GM10248 (cell line): ENCODE measurements at regions of chrX and their contacts with region 1.

Region 1: GRCh38 chrX:119729408-119730201 is 28.8 kb upstream of the SOWAHD start:
- DNase-seq: peak; percentile 59
- CTCF ChIP-seq: peak; percentile 74

Region 2: GRCh38 chrX:119516157-119516702 is 213.4 kb before region 1 on chrX:
- CTCF ChIA-PET with region 1: interaction called, 25 read pairs
- POLR2A ChIA-PET with region 1: no interaction called
- DNase-seq: peak; percentile 80
- CTCF ChIP-seq: peak; percentile 55

Region 3: GRCh38 chrX:119606280-119607015 is 123.2 kb before region 1 on chrX and contains the start of gene NKRF:
- CTCF ChIA-PET with region 1: interaction called, 10 read pairs
- POLR2A ChIA-PET with region 1: no interaction called
- DNase-seq: peak; percentile 81
- CTCF ChIP-seq: no peak

Region 4: DNA sequence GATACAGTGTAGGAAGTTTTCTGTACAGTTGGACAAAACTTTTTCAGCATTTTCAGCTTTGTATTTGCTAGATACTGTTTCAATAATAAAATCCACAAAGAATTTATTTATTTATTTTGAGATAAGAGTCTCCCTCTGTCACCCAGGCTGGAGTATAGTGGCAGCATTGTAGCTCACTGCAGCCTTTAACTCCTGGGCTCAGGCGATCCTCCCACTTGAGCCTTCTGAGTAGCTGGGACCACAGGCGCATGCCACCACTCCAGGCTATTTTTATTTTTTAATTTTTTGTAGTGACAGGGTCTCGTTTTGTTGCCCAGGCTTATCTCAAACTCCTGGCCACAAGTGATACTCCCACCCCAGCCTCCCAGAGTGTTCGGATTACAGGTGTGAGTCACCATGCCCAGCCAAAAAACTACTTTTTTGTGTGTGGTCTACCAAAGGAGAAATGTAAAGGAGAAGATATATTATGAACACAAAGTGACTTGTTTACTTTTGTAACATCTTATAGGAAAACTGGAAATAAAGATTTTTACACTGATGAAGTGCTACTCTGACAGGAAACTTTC is 15.8 kb after region 1 on chrX:
- CTCF ChIA-PET with region 1: interaction called, 12 read pairs
- POLR2A ChIA-PET with region 1: interaction called, 12 read pairs
- DNase-seq: no peak
- CTCF ChIP-seq: no peak

Region 5: DNA sequence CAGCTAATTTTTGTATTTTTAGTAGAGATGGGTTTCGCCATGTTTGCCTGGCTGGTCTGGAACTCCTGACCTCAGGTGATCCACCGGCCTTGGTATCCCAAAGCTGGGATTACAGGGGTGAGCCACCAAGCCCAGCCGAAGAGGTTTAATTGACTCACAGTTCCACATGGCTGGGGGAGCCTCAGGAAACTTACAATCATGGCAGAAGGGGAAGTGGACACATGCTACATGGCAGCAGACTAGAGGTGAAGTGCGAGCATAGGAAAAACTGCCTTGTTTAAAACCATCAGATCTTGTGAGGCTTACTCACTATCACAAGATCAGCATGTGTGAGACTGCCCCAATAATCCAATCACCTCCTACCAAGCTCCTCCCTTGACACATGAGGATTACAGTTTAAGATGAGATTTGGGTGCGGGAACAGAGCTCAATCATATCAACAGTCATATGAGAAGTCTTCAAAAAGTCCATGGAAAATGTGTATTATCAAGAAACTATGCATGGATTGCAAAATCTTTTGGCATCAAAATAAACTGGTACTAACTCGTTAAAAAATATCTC is 87.6 kb after region 1 on chrX:
- CTCF ChIA-PET with region 1: no interaction called
- POLR2A ChIA-PET with region 1: no interaction called
- DNase-seq: no peak
- CTCF ChIP-seq: no peak

Region 6: DNA sequence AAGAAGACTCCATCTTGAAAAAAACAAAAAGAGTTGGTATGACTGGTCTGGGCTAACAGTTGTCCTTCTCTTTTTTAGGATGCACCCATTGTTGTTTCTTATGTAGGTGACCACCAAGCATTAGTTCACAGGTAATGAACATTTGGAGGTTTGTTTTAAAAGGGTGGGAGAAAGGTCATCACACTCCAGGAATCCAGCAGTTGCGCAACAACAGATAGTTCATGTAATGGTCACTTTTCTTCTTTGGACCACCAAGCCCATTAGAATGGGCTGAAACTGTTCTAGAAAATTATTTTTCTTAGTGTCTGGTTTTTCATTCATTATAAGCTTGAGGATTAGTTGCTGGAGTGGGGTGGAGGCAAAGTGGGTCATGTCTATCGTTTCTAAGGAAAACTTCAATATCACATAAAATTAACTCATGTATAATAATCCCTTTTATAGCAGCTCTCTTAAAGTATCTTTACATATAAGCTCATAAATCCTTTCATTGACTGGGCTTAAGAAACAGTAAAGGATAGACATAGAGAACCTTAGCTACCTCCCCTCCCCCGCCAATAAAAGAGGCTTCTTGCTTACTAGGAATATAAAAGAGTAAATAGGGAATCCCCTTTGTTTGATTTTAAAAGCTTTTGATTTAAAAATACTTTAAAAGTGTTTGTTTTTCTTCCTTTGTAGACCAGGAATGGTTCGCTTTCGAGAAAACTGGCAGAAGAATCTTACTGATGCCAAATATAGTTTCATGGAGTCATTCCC is 190.4 kb after region 1 on chrX:
- CTCF ChIA-PET with region 1: no interaction called
- POLR2A ChIA-PET with region 1: no interaction called
- DNase-seq: no peak
- CTCF ChIP-seq: no peak